ENCODE measurements at regions of chr3 and their contacts with region 1.

Region 1: GRCh38 chr3:188052169-188053030 is 101.6 kb upstream of the LPP start:
- DNase-seq: peak; percentile 94 to 98
- H3K4me3 ChIP-seq: peak overlapping the region in 1 of 2 donors; percentile 17
- H3K27ac ChIP-seq: peak overlapping the region; percentile 95 to 97
- H3K4me1 ChIP-seq: peaks cover 7 to 8% of the 10 kb centered on the region in 2 donors
- H3K27me3 ChIP-seq: no peaks in the 10 kb centered on the region
- CTCF ChIP-seq: peak; percentile 59 to 91 (median 74)
- POLR2A ChIP-seq: peak in 1 of 2 donors; percentile 32

Region 2: GRCh38 chr3:187319699-187320302 is 732.6 kb before region 1 on chr3:
- intact Hi-C with region 1: no loop called
- DNase-seq: peak; percentile 68 to 72
- H3K4me3 ChIP-seq: no peak overlapping the region
- H3K27ac ChIP-seq: peak overlapping the region in 1 of 2 donors; percentile 51
- H3K4me1 ChIP-seq: no peaks in the 10 kb centered on the region
- H3K27me3 ChIP-seq: no peaks in the 10 kb centered on the region
- CTCF ChIP-seq: peak; percentile 34 to 75 (median 64)
- POLR2A ChIP-seq: no peak

Region 3: DNA sequence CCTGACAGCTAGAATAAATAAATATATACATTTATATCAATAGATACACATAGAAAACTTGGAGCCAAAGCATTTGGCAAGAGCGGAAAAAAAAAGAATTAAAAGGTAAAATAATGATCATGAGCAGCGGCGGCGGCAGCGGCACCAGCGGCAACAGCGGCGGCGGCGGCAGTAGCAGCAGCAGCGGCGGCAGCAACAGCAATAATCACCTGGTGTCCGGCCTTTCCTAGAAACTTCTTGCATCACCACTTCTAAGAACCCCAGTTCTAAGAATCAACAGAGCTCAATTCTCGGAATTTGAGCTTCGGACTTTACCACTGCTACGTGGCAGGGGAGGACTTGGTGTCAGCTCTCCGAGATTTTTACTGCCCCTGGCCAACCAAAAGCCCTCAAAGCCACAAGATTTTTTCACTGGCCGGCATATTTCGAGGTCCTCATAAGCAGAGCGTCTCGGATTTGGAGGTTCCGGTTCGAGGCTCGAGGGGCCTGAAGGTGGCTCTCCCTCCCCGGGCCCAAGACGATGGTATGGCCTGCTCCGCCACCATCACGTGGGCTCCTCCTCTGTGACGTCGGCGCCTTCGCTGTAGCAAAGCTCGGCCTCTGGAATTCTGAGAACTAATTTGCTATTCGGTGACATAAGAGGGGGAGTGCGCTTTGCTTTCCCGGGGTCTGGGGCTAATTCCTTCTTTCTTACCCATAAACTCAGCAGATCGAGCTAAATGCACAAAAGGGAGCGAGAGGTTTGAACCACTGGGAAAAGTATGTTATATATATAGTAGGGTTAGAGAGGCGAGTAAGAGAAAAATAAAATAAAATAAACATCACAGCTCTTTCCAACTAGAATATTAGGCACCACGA is 307.0 kb before region 1 on chr3 and contains the start of gene BCL6:
- intact Hi-C with region 1: loop called (anchors 10 kb)
- DNase-seq: peak; percentile 92 to 96
- H3K4me3 ChIP-seq: peak within 1 kb of the TSS; percentile 63 to 86
- H3K27ac ChIP-seq: peak within 1 kb of the TSS; percentile 98 to 100
- H3K4me1 ChIP-seq: peaks cover 4 to 8% of the 10 kb centered on the region in 2 donors
- H3K27me3 ChIP-seq: no peaks in the 10 kb centered on the region
- CTCF ChIP-seq: peak in 2 of 4 experiments; percentile 7 to 9
- POLR2A ChIP-seq: peak; percentile 90 to 97
- total RNA-seq, gene BCL6: 6.6 to 188 (median 51.0) TPM

Region 4: GRCh38 chr3:188954590-188955208 is 902.3 kb after region 1 on chr3:
- intact Hi-C with region 1: loop called (anchors 10 kb)
- DNase-seq: peak; percentile 86 to 87
- H3K4me3 ChIP-seq: no peak overlapping the region
- H3K27ac ChIP-seq: peak overlapping the region; percentile 15 to 44
- H3K4me1 ChIP-seq: peaks cover 5 to 15% of the 10 kb centered on the region in 2 donors
- H3K27me3 ChIP-seq: no peaks in the 10 kb centered on the region
- CTCF ChIP-seq: peak; percentile 90 to 95 (median 93)
- POLR2A ChIP-seq: no peak